ENCODE measurements at regions of chr10 and their contacts with region 1.

Region 1: GRCh38 chr10:68720793-68721672 is at the start of gene CCAR1:
- DNase-seq: peak; percentile 99
- H3K4me3 ChIP-seq: peak within 1 kb of the TSS; percentile 74 to 97 (median 95)
- H3K27ac ChIP-seq: peak within 1 kb of the TSS; percentile 85
- H3K4me1 ChIP-seq: peaks cover 5% of the 10 kb centered on the region
- H3K27me3 ChIP-seq: no peaks in the 10 kb centered on the region
- CTCF ChIP-seq: no peak
- total RNA-seq, gene CCAR1: 36.5 to 75.5 TPM

Region 2: DNA sequence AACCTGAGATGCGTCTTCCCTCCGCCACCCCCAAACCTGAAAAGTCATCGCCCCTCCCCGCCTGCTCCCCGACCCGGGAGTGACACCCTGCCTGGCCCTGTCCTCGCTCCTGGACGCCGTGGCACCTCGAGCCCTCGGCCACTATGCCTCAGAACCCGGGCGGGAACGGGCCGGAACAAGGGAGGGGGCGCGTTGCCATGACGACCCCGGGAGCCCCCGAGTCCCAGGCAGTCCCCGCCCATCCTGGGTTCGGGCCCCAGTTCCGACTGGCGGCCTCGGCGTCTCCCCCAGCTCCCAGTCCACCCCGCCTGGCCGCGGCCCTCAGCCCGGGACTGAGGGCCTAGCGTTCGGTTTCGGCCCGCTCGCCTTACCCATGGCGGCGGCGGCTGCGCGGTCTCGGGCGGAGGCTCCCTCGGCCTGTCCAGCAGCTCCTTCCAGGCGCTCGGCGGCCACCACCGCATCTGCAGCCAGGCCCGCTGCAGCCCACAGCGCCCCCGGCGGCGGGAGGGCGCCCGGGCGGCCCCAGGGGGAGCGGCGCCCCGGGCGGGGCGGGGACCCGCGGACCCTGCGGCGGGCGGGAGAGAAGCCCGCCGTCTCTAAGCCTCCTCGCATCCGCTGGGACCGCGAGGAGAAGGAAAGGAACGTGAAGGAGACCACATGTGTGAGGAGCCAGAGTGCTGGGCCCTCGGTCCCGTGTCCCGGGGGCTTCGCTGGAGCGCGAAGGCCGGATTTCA is 314.1 kb before region 1 on chr10 and contains the start of gene RUFY2:
- CTCF ChIA-PET with region 1: no interaction called
- dilution Hi-C with region 1: no loop called
- in situ Hi-C with region 1: no loop called
- intact Hi-C with region 1: loop called (anchors 10 kb)
- DNase-seq: peak; percentile 62
- H3K4me3 ChIP-seq: peak within 1 kb of the TSS; percentile 84 to 97 (median 90)
- H3K27ac ChIP-seq: peak within 1 kb of the TSS; percentile 88
- H3K4me1 ChIP-seq: peaks cover 5% of the 10 kb centered on the region
- H3K27me3 ChIP-seq: no peaks in the 10 kb centered on the region
- CTCF ChIP-seq: peak; percentile 43 to 50
- total RNA-seq, gene RUFY2: 27.2 to 28.9 TPM

Region 3: DNA sequence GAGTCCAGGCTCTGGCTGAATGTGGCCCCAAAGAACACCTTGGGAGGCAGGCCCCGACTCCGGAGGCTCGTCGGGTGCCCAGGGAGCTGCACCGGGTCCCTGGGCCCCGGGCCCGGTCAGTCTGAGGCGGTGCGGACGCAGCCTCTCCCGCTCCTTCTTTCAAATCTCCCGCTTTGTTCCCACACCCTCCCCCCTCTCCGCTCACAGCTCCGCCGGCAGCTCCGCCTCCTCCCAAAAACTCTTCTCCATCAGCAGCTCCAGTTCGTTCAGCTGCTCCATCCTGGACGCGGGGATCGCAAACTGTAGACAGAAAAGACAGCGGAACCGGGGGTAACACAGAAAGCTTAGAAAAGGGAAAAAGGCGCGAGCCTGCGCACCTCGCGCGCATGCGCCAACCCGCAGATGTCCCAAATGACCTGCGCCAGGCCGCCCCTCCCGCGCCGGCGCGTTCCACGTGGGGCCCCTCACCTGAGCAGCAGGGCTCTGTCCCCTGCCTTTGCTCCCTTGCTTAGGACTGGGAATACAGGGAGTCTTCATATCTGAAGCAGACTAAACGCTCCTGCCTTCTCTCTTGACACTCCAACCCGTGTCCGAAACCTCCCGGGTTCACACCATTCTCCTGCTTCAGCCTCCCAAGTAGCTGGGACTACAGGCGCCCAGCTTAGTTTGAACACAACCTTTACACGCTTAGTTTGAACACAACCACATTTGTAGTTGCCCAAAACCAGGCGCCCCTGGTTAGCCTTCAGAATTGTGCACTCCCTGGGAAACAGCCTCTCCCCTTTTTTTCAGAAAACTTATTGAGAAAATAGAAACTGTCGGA is 249.2 kb before region 1 on chr10 and contains the start of gene DNA2:
- CTCF ChIA-PET with region 1: no interaction called
- dilution Hi-C with region 1: no loop called
- in situ Hi-C with region 1: no loop called
- intact Hi-C with region 1: loop called (anchors 5 kb)
- DNase-seq: peak; percentile 75
- H3K4me3 ChIP-seq: peak within 1 kb of the TSS; percentile 80 to 94 (median 83)
- H3K27ac ChIP-seq: peak within 1 kb of the TSS; percentile 82
- H3K4me1 ChIP-seq: peaks cover 5% of the 10 kb centered on the region
- H3K27me3 ChIP-seq: no peaks in the 10 kb centered on the region
- CTCF ChIP-seq: no peak
- total RNA-seq, gene DNA2: 3.8 to 10.3 TPM

Region 4: DNA sequence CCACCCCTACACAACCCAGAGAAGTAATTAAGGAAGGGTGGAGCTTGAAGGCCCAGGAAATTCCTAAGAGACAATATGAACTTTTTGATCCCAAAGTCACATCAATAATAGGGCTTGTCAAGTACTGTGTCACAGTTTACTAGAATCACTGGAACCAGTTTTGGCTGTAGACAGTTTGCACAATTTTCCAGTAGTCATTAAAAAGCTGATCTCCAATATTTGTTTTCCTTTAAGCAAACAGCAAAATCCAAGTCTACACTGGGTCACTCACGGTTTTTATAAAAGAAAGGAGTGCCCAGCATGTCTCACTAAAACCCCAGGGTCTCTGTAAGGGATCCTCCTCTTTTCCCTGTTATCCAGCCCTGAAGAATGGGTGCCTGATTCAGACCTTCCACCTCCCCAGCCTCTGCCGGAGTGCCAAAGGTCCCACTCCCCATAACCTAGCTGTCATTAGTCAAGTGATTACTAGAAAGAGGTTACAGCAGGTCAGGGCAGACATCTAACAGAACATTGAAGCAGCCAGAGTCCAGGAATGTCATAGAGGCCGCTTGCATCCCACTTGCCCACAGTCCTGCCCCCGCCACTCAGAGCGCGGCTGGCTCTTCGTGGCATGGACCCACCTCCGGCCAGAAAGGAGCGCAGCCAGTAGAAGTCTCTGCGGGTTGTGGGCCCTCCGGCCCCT is 194.3 kb before region 1 on chr10:
- CTCF ChIA-PET with region 1: no interaction called
- dilution Hi-C with region 1: no loop called
- in situ Hi-C with region 1: no loop called
- intact Hi-C with region 1: loop called (anchors 2 kb)
- DNase-seq: no peak
- H3K4me3 ChIP-seq: peak overlapping the region; percentile 69 to 99 (median 91)
- H3K27ac ChIP-seq: peak overlapping the region; percentile 76
- H3K4me1 ChIP-seq: no peaks in the 10 kb centered on the region
- H3K27me3 ChIP-seq: no peaks in the 10 kb centered on the region
- CTCF ChIP-seq: no peak

Region 5: DNA sequence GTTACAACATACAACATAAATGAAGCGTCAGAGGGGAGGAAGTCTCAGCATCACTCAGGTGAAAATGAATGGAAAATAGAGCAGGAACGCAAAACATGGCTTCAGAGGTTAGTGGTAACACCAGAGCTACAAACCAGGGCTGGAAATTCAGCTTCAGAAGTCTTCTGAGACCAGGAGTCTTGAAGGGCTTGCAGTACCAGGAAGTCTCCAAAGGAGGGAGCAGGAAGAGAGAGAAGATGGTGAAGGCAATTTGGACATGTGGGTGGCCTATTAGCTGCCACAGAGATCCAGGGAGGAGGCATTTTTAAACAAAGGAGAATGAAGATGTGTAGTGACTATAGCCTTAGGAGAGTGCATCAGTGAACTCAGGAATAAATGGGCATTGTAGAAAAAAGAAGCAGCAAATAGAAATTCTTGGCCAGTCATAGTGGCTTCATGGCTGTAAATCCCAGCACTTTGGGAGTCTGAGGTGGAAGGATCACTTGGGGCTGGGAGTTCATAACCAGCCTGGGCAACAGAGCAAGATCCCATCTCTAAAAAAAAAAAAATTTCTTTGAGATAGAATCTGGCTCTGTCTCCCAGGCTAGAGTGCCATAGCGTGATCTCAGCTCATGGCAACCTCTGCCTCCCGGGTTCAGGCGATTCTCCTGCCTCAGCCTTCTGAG is 170.2 kb before region 1 on chr10:
- CTCF ChIA-PET with region 1: no interaction called
- dilution Hi-C with region 1: no loop called
- in situ Hi-C with region 1: loop called in 1 of 2 experiments (anchors 10 kb)
- intact Hi-C with region 1: loop called (anchors 1 kb)
- DNase-seq: peak; percentile 63
- H3K4me3 ChIP-seq: no peak overlapping the region
- H3K27ac ChIP-seq: no peak overlapping the region
- H3K4me1 ChIP-seq: peaks cover 9% of the 10 kb centered on the region
- H3K27me3 ChIP-seq: no peaks in the 10 kb centered on the region
- CTCF ChIP-seq: peak; percentile 77 to 86

Region 6: DNA sequence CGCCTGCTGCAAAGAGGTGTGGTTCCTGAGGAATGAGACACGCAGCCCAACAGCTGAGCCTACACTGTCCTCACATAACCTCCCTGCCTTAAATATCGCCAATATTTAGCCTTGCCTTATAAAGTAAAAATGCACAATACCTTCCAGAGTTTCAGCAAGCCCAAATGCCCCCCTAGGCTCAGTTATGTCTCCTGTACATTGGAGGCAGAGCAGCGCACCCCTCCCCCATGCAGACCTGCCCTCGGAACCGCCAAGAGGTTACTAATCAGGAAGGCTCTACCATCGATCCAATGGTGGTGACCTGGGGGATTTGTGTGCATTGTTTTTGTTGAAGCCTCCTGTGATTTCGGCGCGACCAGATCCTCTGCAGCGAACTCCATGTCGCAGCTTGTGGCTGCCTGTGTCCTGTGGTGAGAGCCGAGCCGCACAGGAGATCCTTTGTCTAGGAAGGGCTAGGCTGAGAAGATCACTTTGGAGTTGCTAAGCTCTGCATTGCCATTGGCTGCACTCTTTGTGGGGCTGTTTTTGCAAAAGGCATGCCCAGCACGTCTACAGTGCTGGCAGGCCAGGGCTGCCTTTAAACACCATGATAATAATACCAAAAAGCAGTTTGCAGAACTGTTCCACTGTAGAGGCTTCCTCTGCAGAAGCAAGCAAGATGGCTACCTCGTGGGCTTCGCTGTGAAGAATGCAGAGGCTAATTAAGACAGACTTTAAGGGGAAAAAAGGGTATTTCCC is 120.8 kb before region 1 on chr10:
- CTCF ChIA-PET with region 1: no interaction called
- dilution Hi-C with region 1: no loop called
- in situ Hi-C with region 1: no loop called
- intact Hi-C with region 1: loop called (anchors 2 kb)
- DNase-seq: peak; percentile 90
- H3K4me3 ChIP-seq: peak overlapping the region; percentile 26 to 49 (median 44)
- H3K27ac ChIP-seq: peak overlapping the region; percentile 44
- H3K4me1 ChIP-seq: peaks cover 21% of the 10 kb centered on the region
- H3K27me3 ChIP-seq: no peaks in the 10 kb centered on the region
- CTCF ChIP-seq: no peak

Region 7: GRCh38 chr10:68647672-68648341 is 73.2 kb before region 1 on chr10:
- CTCF ChIA-PET with region 1: no interaction called
- dilution Hi-C with region 1: no loop called
- in situ Hi-C with region 1: no loop called
- intact Hi-C with region 1: loop called (anchors 1 kb)
- DNase-seq: peak; percentile 76
- H3K4me3 ChIP-seq: no peak overlapping the region
- H3K27ac ChIP-seq: peak overlapping the region; percentile 67
- H3K4me1 ChIP-seq: peaks cover 11% of the 10 kb centered on the region
- H3K27me3 ChIP-seq: no peaks in the 10 kb centered on the region
- CTCF ChIP-seq: no peak

Region 8: GRCh38 chr10:68902382-68902781 is 181.3 kb after region 1 on chr10:
- CTCF ChIA-PET with region 1: no interaction called
- dilution Hi-C with region 1: no loop called
- in situ Hi-C with region 1: no loop called
- intact Hi-C with region 1: no loop called
- DNase-seq: no peak
- H3K4me3 ChIP-seq: peak overlapping the region; percentile 68 to 94 (median 77)
- H3K27ac ChIP-seq: peak overlapping the region; percentile 93
- H3K4me1 ChIP-seq: peaks cover 17% of the 10 kb centered on the region
- H3K27me3 ChIP-seq: no peaks in the 10 kb centered on the region
- CTCF ChIP-seq: no peak